ENCODE measurements at regions of chr9 and their contacts with region 1.

Region 1: DNA sequence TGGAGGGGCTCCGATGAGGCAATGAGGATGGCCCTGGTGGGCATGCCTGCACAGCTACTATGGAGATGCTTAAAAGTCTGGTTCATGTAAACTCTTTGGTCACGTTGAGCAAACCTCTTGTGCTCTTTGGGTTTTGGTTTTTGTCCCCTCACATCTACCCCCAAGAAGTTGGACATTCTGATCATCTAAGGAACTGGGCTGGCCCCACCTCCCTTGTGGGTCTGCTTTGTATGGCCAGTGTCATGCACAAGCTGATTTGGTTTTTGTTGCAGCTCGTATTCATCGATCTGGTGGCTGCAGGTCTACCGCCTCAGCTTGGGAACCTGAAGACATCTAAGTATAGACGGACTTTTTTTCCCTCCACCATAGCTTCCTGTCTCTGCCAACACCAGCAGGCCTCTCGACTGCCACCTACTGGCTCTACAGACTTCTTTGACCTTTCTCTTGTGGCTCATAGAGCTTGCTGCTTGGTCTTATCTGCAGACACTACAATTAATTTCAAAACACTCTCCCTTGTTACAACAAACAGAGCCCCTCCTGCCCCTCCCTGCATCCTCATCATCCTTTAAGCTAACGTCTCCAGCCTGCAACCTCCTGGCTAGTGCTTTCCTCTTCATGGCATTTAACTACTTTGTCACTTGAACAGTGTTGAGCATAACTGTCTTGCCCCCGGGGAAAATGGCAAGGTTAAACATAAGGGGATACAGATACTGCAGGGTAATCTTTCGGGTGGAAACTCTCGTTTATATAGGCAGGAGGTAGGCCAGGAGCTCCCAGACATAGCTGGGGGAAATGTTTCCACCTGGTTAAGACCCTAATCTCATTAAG is 34.5 kb downstream of the TSTD2 start:
- DNase-seq: peak; percentile 60
- H3K4me3 ChIP-seq: no peak overlapping the region
- H3K27ac ChIP-seq: no peak overlapping the region
- H3K27me3 ChIP-seq: peaks cover 6% of the 10 kb centered on the region
- CTCF ChIP-seq: peak; percentile 95

Region 2: DNA sequence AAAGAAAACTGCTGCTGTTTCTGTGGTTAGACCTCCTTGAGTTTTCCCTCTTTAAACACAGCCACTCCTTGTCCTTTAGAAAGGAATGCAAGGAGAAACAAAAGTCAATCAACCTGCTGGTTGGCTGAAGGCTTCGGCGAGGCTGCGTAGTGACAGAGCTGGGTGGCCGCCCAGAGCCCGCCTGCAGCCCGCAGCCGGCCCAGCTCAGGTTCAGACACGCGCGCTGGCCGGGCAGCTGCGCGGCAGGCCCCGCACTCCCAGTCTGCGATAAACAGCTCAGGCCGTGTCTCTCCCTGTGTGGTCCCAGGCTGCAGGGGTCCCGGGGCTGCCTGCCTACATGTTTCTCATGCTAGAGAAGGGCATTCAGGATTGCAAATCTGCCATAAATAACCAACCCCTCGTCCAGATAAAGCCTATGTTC is 1412.1 kb before region 1 on chr9:
- CTCF ChIA-PET with region 1: no interaction called
- POLR2A ChIA-PET with region 1: no interaction called
- DNase-seq: no peak
- H3K4me3 ChIP-seq: no peak overlapping the region
- H3K27ac ChIP-seq: no peak overlapping the region
- H3K27me3 ChIP-seq: peaks cover 35% of the 10 kb centered on the region
- CTCF ChIP-seq: no peak

Region 3: GRCh38 chr9:97419309-97419867 is 179.3 kb before region 1 on chr9:
- CTCF ChIA-PET with region 1: interaction called, 42 read pairs
- POLR2A ChIA-PET with region 1: no interaction called
- DNase-seq: no peak
- H3K4me3 ChIP-seq: no peak overlapping the region
- H3K27ac ChIP-seq: no peak overlapping the region
- H3K27me3 ChIP-seq: no peaks in the 10 kb centered on the region
- CTCF ChIP-seq: no peak

Region 4: GRCh38 chr9:97468658-97469448 is 129.8 kb before region 1 on chr9:
- CTCF ChIA-PET with region 1: interaction called, 704 read pairs
- POLR2A ChIA-PET with region 1: interaction called, 8 read pairs
- DNase-seq: peak; percentile 16
- H3K4me3 ChIP-seq: no peak overlapping the region
- H3K27ac ChIP-seq: no peak overlapping the region
- H3K27me3 ChIP-seq: no peaks in the 10 kb centered on the region
- CTCF ChIP-seq: peak; percentile 82

Region 5: GRCh38 chr9:97501177-97501971 is 97.3 kb before region 1 on chr9 and contains the start of gene TMOD1:
- CTCF ChIA-PET with region 1: interaction called, 25 read pairs
- POLR2A ChIA-PET with region 1: no interaction called
- DNase-seq: no peak
- H3K4me3 ChIP-seq: peak within 1 kb of the TSS; percentile 50
- H3K27ac ChIP-seq: no peak within 1 kb of the TSS
- H3K27me3 ChIP-seq: peaks cover 52% of the 10 kb centered on the region
- CTCF ChIP-seq: no peak
- polyA plus RNA-seq, gene TMOD1: 0.10 and 0.19 TPM in 2 replicates

Region 6: GRCh38 chr9:97570899-97571298 is 27.8 kb before region 1 on chr9:
- CTCF ChIA-PET with region 1: interaction called, 14 read pairs
- POLR2A ChIA-PET with region 1: no interaction called
- DNase-seq: no peak
- H3K4me3 ChIP-seq: no peak overlapping the region
- H3K27ac ChIP-seq: no peak overlapping the region
- H3K27me3 ChIP-seq: peaks cover 11% of the 10 kb centered on the region
- CTCF ChIP-seq: no peak

Region 7: GRCh38 chr9:97632985-97633858 is 34.5 kb after region 1 on chr9 and contains the starts of genes NCBP1 and TSTD2:
- CTCF ChIA-PET with region 1: interaction called, 14 read pairs
- POLR2A ChIA-PET with region 1: interaction called, 3 read pairs
- DNase-seq: peak; percentile 96
- H3K4me3 ChIP-seq: peak within 1 kb of the TSS; percentile 97
- H3K27ac ChIP-seq: peak within 1 kb of the TSS; percentile 100
- H3K27me3 ChIP-seq: no peaks in the 10 kb centered on the region
- CTCF ChIP-seq: 0 out of 2 replicates have a peak, but pooled peaks have one; percentile 2
- polyA plus RNA-seq, gene NCBP1: 28.8 and 39.2 TPM in 2 replicates
- polyA plus RNA-seq, gene TSTD2: 17.1 and 17.3 TPM in 2 replicates

Measured in AG04450 (cell line).